A549 (cell line): ENCODE measurements at regions of chr19 and their contacts with region 1.

Region 1: DNA sequence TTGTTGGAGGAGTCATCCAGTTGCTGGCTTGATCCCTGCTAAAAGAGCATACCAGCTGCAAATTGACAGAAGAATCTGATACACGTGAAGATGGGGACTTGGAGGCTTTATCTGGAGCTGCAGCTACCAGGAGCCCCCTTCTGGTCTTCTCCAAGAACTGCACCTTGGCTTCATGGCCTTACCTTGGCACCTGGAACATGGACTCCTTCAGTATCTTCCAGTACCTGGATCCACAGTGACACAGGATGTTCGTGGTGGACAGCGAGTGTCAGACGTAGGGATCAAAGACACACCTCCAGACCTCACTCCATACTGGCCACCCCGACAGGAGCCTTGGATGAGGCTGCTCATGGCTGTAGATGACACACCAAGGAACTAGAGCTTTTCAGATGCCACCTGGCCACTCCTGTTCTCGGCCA is 9.9 kb upstream of the ACSBG2 start:
- DNase-seq: peak in 1 of 2 experiments; percentile 83
- ATAC-seq: peak; percentile 90 to 93
- H3K4me3 ChIP-seq: no peak overlapping the region
- H3K27ac ChIP-seq: no peak overlapping the region
- H3K4me1 ChIP-seq: no peaks in the 10 kb centered on the region
- CTCF ChIP-seq: peak; percentile 79
- EP300 ChIP-seq: no peak
- POLR2A ChIP-seq: no peak
- RAD21 ChIP-seq: peak; percentile 87 to 90

Region 2: DNA sequence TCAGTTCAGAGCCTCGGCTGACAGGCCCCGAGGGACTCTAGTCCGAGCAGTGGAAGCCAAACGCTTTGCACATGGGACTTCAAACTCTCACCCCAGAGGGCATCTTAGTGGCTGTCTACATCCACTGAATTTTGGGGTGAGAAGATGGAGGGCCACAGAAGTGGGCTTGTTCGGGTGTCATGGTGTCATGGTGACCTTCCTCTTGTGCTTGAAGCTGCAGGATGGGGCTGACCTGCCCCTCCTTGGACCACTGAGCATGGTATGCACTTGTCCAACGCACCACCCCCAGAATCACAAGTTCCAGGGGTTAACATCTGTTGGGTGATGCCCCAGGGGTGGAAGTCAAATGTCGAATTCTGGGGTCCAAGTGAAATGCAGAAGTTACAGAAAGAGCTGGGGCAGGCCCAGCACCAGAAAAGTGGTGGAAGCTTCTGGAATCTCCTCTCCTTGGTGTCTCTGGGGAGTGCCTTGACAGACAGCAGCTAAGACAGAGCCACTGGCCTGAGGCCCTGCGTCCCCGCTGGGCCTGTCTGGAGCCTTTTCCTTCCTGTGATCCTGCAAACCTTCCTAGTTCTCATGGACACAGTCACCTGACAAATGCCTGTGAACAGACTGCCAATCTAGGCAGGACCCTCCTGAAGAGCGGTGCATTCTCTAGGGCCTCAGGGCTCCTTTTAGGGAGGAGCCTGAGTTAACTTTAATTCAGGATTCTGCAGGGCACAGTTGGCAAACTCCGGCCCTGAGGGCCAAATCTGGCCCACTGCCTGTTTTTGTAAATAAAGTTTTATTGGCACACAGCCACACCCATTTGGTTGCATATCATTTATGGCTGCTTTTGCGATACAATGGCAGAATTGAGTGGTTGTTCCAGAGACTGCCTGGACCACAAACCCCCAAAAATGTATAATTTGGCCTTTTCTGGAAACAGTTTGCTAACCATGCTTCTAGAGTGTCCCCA is 82.5 kb before region 1 on chr19:
- CTCF ChIA-PET with region 1: interaction called, 144 read pairs
- POLR2A ChIA-PET with region 1: interaction called, 3 read pairs
- DNase-seq: no peak
- ATAC-seq: no peak
- H3K4me3 ChIP-seq: no peak overlapping the region
- H3K27ac ChIP-seq: no peak overlapping the region
- H3K4me1 ChIP-seq: peaks cover under 1% of the 10 kb centered on the region; the same call in 1 of the 3 replicates
- CTCF ChIP-seq: no peak
- EP300 ChIP-seq: no peak
- POLR2A ChIP-seq: no peak
- RAD21 ChIP-seq: no peak

Region 3: GRCh38 chr19:6076675-6077463 is 48.7 kb before region 1 on chr19:
- CTCF ChIA-PET with region 1: interaction called, 21 read pairs
- POLR2A ChIA-PET with region 1: no interaction called
- DNase-seq: peak in 1 of 2 experiments; percentile 35
- ATAC-seq: peak; percentile 62 to 71; a peak in 3 of 6 replicates
- H3K4me3 ChIP-seq: no peak overlapping the region
- H3K27ac ChIP-seq: peak overlapping the region; percentile 23 to 78; a peak in 5 of 6 replicates
- H3K4me1 ChIP-seq: peaks cover 13% of the 10 kb centered on the region; the same call in 2 of the 3 replicates
- CTCF ChIP-seq: no peak
- EP300 ChIP-seq: no peak
- POLR2A ChIP-seq: no peak
- RAD21 ChIP-seq: no peak

Region 4: DNA sequence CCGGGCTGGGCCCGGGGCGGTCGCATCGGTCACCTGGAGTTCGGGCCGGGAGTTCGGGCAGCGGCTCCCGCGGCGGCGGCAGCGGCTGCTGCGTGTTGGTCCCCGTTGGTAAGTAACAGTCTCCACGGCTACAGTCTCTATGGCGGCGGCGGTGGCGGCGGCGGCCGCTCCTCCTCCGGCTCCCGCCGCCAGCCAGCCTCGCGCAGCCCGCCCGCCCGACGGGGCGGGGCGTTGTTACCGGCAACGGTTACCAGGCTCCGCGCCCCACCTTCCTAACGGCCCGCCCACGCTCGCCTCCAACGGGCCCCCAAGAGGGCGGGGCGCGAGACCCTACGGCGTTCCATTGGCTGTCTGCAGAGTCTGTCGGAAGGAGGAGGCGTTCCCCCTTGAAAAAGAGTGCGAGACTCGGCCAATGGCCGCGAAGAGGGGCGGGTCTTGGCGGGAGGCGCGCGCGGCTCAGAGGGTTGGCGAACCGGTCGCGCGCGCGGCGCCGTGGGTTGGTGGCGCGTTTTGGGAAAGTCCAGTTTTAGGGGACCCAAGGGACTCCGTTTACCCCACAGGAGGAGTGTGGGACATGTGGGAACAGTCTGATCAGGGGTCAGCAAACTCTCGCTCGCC is 15.1 kb before region 1 on chr19 and contains the start of gene RFX2:
- CTCF ChIA-PET with region 1: interaction called, 53 read pairs
- POLR2A ChIA-PET with region 1: no interaction called
- DNase-seq: peak; percentile 89 to 97
- ATAC-seq: peak; percentile 97
- H3K4me3 ChIP-seq: peak within 1 kb of the TSS; percentile 73
- H3K27ac ChIP-seq: peak within 1 kb of the TSS; percentile 73 to 95
- H3K4me1 ChIP-seq: peaks cover 8% of the 10 kb centered on the region; the same call in 2 of the 3 replicates
- CTCF ChIP-seq: no peak
- EP300 ChIP-seq: no peak
- POLR2A ChIP-seq: 0 out of 2 replicates have a peak, but pooled peaks have one; percentile 16
- RAD21 ChIP-seq: no peak
- polyA plus RNA-seq, gene RFX2: 3.9 and 4.0 TPM in 2 replicates